ENCODE measurements at regions of chr2 and their contacts with region 1.

Region 1: GRCh38 chr2:202178342-202178958 is 59.9 kb downstream of the SUMO1 start:
- DNase-seq: peak; percentile 63 to 76 (median 69)
- H3K4me3 ChIP-seq: no peak overlapping the region
- H3K27ac ChIP-seq: no peak overlapping the region
- H3K4me1 ChIP-seq: no peaks in the 10 kb centered on the region
- H3K27me3 ChIP-seq: peaks cover 0 to 2% (median 0%) of the 10 kb centered on the region in 5 experiments

Region 2: GRCh38 chr2:201795607-201796477 is 382.6 kb before region 1 on chr2:
- CTCF ChIA-PET with region 1: interaction called, 15 read pairs
- POLR2A ChIA-PET with region 1: no interaction called
- DNase-seq: peak; percentile 26 to 47 (median 43)
- H3K4me3 ChIP-seq: no peak overlapping the region
- H3K27ac ChIP-seq: no peak overlapping the region
- H3K4me1 ChIP-seq: peaks cover 3 to 11% (median 7%) of the 10 kb centered on the region in 4 experiments
- H3K27me3 ChIP-seq: no peaks in the 10 kb centered on the region

Region 3: DNA sequence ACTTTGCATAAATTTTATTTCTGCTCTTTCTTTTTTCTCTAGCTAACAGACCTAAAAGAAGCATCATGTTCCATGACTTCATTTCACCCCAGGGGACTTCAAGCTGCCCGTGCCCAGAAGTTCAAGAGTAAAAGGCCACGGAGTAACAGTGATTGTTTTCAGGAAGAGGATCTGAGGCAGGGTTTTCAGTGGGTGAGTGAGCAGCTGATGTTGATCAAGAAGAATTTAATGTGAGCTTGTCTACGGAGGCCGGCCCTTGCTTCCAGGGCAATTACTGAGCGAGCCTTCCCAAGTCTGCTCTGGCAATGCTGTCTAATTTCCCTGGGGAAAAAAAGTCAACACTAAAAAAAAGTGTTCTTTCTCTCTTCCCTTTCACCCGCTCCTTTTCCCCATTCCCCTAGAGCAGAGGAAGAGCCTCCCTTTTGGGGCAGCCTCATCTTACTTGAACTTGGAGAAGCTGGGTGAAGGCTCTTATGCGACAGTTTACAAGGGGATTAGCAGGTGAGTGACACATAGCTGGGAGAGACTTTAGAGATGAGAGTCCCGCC is 370.9 kb before region 1 on chr2:
- CTCF ChIA-PET with region 1: interaction called, 11 read pairs
- POLR2A ChIA-PET with region 1: no interaction called
- DNase-seq: no peak
- H3K4me3 ChIP-seq: no peak overlapping the region
- H3K27ac ChIP-seq: no peak overlapping the region
- H3K4me1 ChIP-seq: no peaks in the 10 kb centered on the region
- H3K27me3 ChIP-seq: no peaks in the 10 kb centered on the region

Region 4: DNA sequence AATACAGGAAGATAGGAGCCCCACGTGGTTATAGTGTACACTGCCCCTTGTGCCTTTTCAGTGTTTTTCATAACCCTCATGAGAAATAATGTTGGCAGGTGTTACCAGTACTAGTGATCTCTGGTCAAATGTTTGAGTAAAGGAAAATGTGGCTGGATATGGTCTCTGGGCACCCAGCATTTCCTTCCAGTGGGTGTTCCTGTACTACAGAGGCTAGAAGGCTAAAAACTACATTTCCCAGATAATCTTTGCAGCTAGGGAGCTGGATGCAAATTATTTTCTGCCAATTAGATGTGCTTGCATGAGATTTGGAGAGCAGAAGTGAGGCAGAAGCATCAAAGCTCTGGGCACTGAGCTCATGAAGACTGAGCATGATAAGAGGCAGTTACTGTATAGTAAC is 60.3 kb before region 1 on chr2:
- CTCF ChIA-PET with region 1: no interaction called
- POLR2A ChIA-PET with region 1: no interaction called
- DNase-seq: no peak
- H3K4me3 ChIP-seq: no peak overlapping the region
- H3K27ac ChIP-seq: no peak overlapping the region
- H3K4me1 ChIP-seq: peaks cover 0 to 22% (median 8%) of the 10 kb centered on the region in 4 experiments
- H3K27me3 ChIP-seq: no peaks in the 10 kb centered on the region

Region 5: DNA sequence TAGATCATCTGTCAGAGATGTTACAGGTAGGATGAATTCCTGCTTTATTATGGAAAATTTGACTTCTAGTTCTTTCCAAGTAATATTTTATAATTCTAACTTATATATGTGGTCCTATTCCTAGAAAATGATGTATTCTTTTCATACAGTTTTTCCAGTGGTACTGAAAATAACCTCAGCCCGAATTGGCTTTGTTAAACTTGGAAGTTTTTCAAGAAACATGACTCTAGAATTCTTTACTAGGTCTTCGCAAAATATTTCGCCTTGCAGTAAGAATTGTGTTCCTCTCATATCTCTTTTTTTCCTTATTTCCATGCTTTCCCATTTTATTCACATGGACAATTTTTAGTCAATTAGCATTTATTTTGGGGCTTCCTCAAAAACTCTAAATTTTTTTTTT is 258.2 kb after region 1 on chr2:
- CTCF ChIA-PET with region 1: no interaction called
- POLR2A ChIA-PET with region 1: no interaction called
- DNase-seq: no peak
- H3K4me3 ChIP-seq: no peak overlapping the region
- H3K27ac ChIP-seq: no peak overlapping the region
- H3K4me1 ChIP-seq: no peaks in the 10 kb centered on the region
- H3K27me3 ChIP-seq: peaks cover 0 to 7% (median 0%) of the 10 kb centered on the region in 5 experiments